Activated CD4-positive, alpha-beta memory T cell treated with anti-CD3 and anti-CD28 coated beads, Interleukin-2, amount 10 ng/mL, durations not matched to agents 7 days and 5 days (primary cell): ENCODE measurements at regions of chr1 and their contacts with region 1.

Region 1: GRCh38 chr1:110338886-110339406 is at the start of gene RBM15:
- DNase-seq: peak; percentile 98
- H3K4me3 Mint-ChIP-seq: no peak within 1 kb of the TSS
- H3K27ac Mint-ChIP-seq: no peak within 1 kb of the TSS
- H3K4me1 Mint-ChIP-seq: peaks cover 60% of the 10 kb centered on the region
- H3K27me3 Mint-ChIP-seq: no peaks in the 10 kb centered on the region
- total RNA-seq, gene RBM15: 63.4 to 68.1 TPM

Region 2: GRCh38 chr1:110087812-110088738 is 250.9 kb before region 1 on chr1:
- CTCF ChIA-PET with region 1: no interaction called
- POLR2A ChIA-PET with region 1: no interaction called
- DNase-seq: peak; percentile 48
- H3K4me3 Mint-ChIP-seq: no peak overlapping the region
- H3K27ac Mint-ChIP-seq: no peak overlapping the region
- H3K4me1 Mint-ChIP-seq: peaks cover 10% of the 10 kb centered on the region
- H3K27me3 Mint-ChIP-seq: peaks cover 58% of the 10 kb centered on the region

Region 3: GRCh38 chr1:110203021-110203661 is 135.8 kb before region 1 on chr1:
- CTCF ChIA-PET with region 1: interaction called, 86 read pairs
- POLR2A ChIA-PET with region 1: interaction called, 142 read pairs
- DNase-seq: peak; percentile 73
- H3K4me3 Mint-ChIP-seq: no peak overlapping the region
- H3K27ac Mint-ChIP-seq: peak overlapping the region; percentile 66
- H3K4me1 Mint-ChIP-seq: peaks cover 19% of the 10 kb centered on the region
- H3K27me3 Mint-ChIP-seq: no peaks in the 10 kb centered on the region

Region 4: GRCh38 chr1:110360431-110360830 is 21.5 kb after region 1 on chr1:
- CTCF ChIA-PET with region 1: interaction called, 3 read pairs
- POLR2A ChIA-PET with region 1: interaction called, 12 read pairs
- DNase-seq: no peak
- H3K4me3 Mint-ChIP-seq: no peak overlapping the region
- H3K27ac Mint-ChIP-seq: no peak overlapping the region
- H3K4me1 Mint-ChIP-seq: peaks cover 22% of the 10 kb centered on the region
- H3K27me3 Mint-ChIP-seq: no peaks in the 10 kb centered on the region

Region 5: GRCh38 chr1:110407260-110408210 is 68.6 kb after region 1 on chr1 and contains the start of gene LAMTOR5:
- CTCF ChIA-PET with region 1: interaction called, 23 read pairs
- POLR2A ChIA-PET with region 1: interaction called, 94 read pairs
- DNase-seq: peak; percentile 94
- H3K4me3 Mint-ChIP-seq: peak within 1 kb of the TSS; percentile 95
- H3K27ac Mint-ChIP-seq: peak within 1 kb of the TSS; percentile 96
- H3K4me1 Mint-ChIP-seq: peaks cover 27% of the 10 kb centered on the region
- H3K27me3 Mint-ChIP-seq: no peaks in the 10 kb centered on the region
- total RNA-seq, gene LAMTOR5: 127 to 128 TPM

Region 6: DNA sequence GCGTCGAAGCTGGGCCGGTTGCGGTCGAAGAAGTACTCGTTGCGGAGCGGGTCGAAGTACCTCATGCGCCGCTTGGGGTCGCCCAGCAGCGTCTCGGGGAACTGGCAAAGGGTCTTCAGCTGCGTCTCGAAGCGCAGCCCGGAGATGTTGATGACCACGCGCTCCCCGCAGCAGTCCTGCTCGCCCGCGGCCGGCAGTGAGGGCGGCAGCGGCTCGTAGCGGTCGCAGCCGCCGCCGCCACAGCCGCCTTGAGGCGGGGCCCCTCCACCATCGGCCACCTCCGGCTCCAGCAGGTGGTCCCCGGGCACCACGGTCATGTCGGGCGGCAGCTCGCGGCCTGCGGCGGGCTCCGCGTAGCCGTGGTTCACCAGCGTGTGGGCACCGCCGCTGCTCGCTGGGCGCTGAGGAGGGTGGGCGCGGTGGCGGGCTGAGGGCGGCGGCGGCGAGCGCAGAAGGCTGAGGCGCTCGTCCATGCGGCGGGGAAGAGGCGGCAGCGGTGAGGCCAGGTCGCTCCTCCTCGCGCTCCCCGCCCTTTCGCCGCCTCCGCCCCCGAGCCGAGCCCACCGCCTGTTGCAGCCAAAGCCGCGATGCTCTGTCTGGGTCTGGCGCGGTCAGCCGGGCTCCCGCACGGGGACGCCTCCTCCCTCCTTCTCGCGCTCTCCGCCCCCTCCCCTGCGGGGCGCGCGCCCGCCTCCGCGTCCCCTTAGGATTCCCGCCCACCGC is 335.6 kb after region 1 on chr1 and contains the start of gene KCNA3:
- CTCF ChIA-PET with region 1: interaction called, 3 read pairs
- POLR2A ChIA-PET with region 1: interaction called, 25 read pairs
- DNase-seq: peak; percentile 74
- H3K4me3 Mint-ChIP-seq: peak within 1 kb of the TSS; percentile 100
- H3K27ac Mint-ChIP-seq: peak within 1 kb of the TSS; percentile 89
- H3K4me1 Mint-ChIP-seq: peaks cover 28% of the 10 kb centered on the region
- H3K27me3 Mint-ChIP-seq: no peaks in the 10 kb centered on the region
- total RNA-seq, gene KCNA3: 84.9 to 86.2 TPM

Region 7: DNA sequence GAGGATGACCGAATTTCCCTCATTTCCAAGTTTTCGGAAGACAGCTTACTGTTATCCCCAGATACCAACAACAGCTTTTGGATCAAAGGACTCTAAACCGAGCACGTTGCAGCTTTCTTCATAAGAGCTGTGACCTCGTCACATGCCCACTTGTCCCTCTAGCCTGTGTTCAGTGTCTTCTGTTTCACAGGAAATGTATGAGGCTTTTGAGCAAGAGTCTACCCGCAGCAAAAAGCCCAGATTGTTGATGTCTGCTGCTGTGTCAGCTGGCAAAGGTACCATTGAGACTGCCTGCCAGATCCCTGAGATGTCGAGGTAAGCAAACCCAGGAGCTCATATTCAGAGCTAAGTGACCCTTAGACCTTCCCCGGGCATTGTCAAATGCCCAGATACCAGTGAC is 912.6 kb after region 1 on chr1:
- CTCF ChIA-PET with region 1: no interaction called
- POLR2A ChIA-PET with region 1: no interaction called
- DNase-seq: no peak
- H3K4me3 Mint-ChIP-seq: no peak overlapping the region
- H3K27ac Mint-ChIP-seq: no peak overlapping the region
- H3K4me1 Mint-ChIP-seq: no peaks in the 10 kb centered on the region
- H3K27me3 Mint-ChIP-seq: peaks cover 8% of the 10 kb centered on the region